WTC11 (cell line): ENCODE measurements at regions of chr7 and their contacts with region 1.

Region 1: DNA sequence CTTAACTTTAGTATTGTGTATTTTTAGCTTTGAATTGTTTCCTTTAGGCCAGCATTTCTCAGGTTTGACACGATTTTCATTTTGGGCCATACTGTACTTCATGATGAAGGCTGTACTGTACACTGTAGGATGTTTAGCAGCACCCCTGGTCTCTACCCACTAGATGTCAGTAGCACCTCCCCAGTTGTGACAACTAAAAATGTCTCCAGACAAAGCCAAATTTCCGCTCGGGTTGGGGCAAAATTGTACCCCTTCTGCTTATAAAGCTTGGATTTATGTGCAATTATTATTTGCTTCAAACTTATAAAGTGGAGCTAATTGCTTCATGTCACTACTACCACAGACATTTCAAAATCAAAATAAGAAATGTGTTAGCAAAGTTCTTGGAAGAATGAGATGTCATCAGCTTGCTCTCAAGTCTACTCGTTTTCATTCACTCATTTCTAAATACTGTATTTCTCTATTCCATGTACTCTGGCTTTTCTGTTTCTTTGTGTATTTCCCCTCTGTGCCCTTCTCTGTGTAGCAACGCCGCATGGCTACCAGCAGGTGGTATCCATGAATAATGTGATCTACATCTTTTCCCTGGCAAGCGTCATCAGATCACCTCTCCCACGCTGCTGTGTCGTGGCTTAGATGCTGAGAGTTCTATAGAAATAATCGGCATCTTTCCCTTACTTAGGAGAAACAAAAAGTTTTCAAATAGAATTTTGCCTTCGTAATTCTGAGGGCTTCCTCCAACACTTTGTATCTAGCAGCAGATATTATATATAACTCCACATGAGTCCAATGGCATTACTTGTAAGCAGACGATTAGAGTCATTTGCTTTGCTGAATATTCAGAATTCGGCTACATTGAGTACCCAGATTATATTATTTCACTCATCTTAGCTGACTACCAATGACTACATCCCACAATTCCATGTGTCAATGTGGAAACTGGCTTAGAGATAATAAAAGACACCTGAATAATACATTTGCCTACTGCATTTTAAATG is 47.8 kb upstream of the CALCR start:
- DNase-seq: peak; percentile 20
- ATAC-seq: peak; percentile 89
- H3K4me3 Mint-ChIP-seq: peak overlapping the region; percentile 52
- H3K27ac Mint-ChIP-seq: peak overlapping the region; percentile 70
- H3K4me1 Mint-ChIP-seq: peaks cover 42% of the 10 kb centered on the region
- H3K27me3 Mint-ChIP-seq: no peaks in the 10 kb centered on the region
- CTCF ChIP-seq: no peak; the same call in 1 of the 2 replicates

Region 2: DNA sequence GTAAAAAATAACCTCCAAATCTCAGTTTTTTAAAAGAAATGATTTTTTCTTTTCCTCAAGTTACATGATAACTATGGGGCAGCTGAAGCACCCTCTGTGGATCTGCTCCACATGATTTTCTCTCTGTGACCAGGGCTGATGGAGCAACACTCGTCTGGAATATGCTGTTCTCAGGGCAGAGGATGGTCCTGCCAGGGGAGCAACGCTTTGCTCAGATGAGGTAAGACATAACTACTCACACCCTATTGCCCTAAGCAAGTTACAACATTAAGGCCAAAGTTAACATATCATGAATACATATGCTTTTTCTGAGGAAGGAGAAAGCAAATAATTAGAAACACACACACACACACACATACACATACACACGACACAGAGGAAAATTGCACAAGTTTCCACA is 119.3 kb before region 1 on chr7:
- CTCF ChIA-PET with region 1: no interaction called
- POLR2A ChIA-PET with region 1: no interaction called
- DNase-seq: no peak
- ATAC-seq: no peak
- H3K4me3 Mint-ChIP-seq: no peak overlapping the region
- H3K27ac Mint-ChIP-seq: no peak overlapping the region
- H3K4me1 Mint-ChIP-seq: no peaks in the 10 kb centered on the region
- H3K27me3 Mint-ChIP-seq: no peaks in the 10 kb centered on the region
- CTCF ChIP-seq: no peak

Region 3: GRCh38 chr7:93558705-93559614 is 63.4 kb before region 1 on chr7:
- CTCF ChIA-PET with region 1: no interaction called
- POLR2A ChIA-PET with region 1: no interaction called
- DNase-seq: no peak
- ATAC-seq: peak; percentile 84
- H3K4me3 Mint-ChIP-seq: no peak overlapping the region
- H3K27ac Mint-ChIP-seq: peak overlapping the region; percentile 75
- H3K4me1 Mint-ChIP-seq: peaks cover 16% of the 10 kb centered on the region
- H3K27me3 Mint-ChIP-seq: no peaks in the 10 kb centered on the region
- CTCF ChIP-seq: no peak

Region 4: DNA sequence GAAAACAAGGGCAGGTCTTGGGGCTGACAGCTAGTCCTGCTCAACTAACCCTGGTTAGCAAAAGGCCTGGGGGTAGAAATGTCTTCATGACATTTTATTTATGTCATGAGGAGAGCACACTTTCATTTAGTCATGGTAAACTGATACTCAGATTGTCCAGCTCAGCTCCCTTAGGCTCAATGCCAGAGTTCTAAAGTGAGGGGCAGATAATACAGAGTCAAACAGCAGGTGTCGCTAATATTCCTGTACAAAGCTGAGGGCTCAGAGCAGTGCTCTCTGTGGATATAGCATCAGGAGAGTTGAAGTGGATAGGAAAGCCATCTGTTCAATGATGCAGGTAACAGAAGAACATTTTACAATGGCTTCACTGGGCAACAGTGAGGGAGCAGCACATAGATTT is 21.0 kb before region 1 on chr7:
- CTCF ChIA-PET with region 1: interaction called, 11 read pairs
- POLR2A ChIA-PET with region 1: no interaction called
- DNase-seq: no peak
- ATAC-seq: peak; percentile 88
- H3K4me3 Mint-ChIP-seq: no peak overlapping the region
- H3K27ac Mint-ChIP-seq: no peak overlapping the region; the same call in 1 of the 2 replicates
- H3K4me1 Mint-ChIP-seq: peaks cover 6% of the 10 kb centered on the region
- H3K27me3 Mint-ChIP-seq: no peaks in the 10 kb centered on the region
- CTCF ChIP-seq: no peak